Activated B cell treated with CpG ODN at 0.5 μM for 24 hours (primary cell): ENCODE measurements at regions of chr11 and their contacts with region 1.

Region 1: GRCh38 chr11:59186130-59186594 is 14.2 kb downstream of the DTX4 start:
- DNase-seq: peak; percentile 44
- ATAC-seq: peak; percentile 69
- H3K4me3 Mint-ChIP-seq: no peak overlapping the region
- H3K27ac Mint-ChIP-seq: peak overlapping the region; percentile 24
- H3K4me1 Mint-ChIP-seq: peaks cover 20% of the 10 kb centered on the region
- H3K27me3 Mint-ChIP-seq: no peaks in the 10 kb centered on the region
- CTCF ChIP-seq: peak; percentile 22

Region 2: GRCh38 chr11:59197991-59198390 is 11.8 kb after region 1 on chr11:
- CTCF ChIA-PET with region 1: interaction called, 22 read pairs
- POLR2A ChIA-PET with region 1: interaction called, 6 read pairs
- intact Hi-C with region 1: no loop called
- DNase-seq: no peak
- ATAC-seq: peak; percentile 26
- H3K4me3 Mint-ChIP-seq: no peak overlapping the region
- H3K27ac Mint-ChIP-seq: peak overlapping the region; percentile 88
- H3K4me1 Mint-ChIP-seq: peaks cover 82% of the 10 kb centered on the region
- H3K27me3 Mint-ChIP-seq: no peaks in the 10 kb centered on the region
- CTCF ChIP-seq: no peak